ENCODE measurements at regions of chr5 and their contacts with region 1.

Region 1: GRCh38 chr5:116947691-116948528 is 373.3 kb upstream of the SEMA6A start:
- DNase-seq: peak; percentile 73
- H3K4me3 ChIP-seq: no peak overlapping the region
- H3K27ac ChIP-seq: no peak overlapping the region
- H3K4me1 ChIP-seq: no peaks in the 10 kb centered on the region
- CTCF ChIP-seq: peak; percentile 89

Region 2: GRCh38 chr5:116137544-116138378 is 810.1 kb before region 1 on chr5:
- CTCF ChIA-PET with region 1: no interaction called
- POLR2A ChIA-PET with region 1: no interaction called
- intact Hi-C with region 1: loop called (anchors 5 kb)
- DNase-seq: peak; percentile 61
- H3K4me3 ChIP-seq: no peak overlapping the region
- H3K27ac ChIP-seq: no peak overlapping the region
- H3K4me1 ChIP-seq: no peaks in the 10 kb centered on the region
- CTCF ChIP-seq: peak; percentile 93

Region 3: GRCh38 chr5:116557669-116558271 is 390.1 kb before region 1 on chr5:
- CTCF ChIA-PET with region 1: no interaction called
- POLR2A ChIA-PET with region 1: no interaction called
- intact Hi-C with region 1: loop called (anchors 5 kb)
- DNase-seq: peak; percentile 16
- H3K4me3 ChIP-seq: no peak overlapping the region
- H3K27ac ChIP-seq: no peak overlapping the region
- H3K4me1 ChIP-seq: no peaks in the 10 kb centered on the region
- CTCF ChIP-seq: peak; percentile 79

Region 4: DNA sequence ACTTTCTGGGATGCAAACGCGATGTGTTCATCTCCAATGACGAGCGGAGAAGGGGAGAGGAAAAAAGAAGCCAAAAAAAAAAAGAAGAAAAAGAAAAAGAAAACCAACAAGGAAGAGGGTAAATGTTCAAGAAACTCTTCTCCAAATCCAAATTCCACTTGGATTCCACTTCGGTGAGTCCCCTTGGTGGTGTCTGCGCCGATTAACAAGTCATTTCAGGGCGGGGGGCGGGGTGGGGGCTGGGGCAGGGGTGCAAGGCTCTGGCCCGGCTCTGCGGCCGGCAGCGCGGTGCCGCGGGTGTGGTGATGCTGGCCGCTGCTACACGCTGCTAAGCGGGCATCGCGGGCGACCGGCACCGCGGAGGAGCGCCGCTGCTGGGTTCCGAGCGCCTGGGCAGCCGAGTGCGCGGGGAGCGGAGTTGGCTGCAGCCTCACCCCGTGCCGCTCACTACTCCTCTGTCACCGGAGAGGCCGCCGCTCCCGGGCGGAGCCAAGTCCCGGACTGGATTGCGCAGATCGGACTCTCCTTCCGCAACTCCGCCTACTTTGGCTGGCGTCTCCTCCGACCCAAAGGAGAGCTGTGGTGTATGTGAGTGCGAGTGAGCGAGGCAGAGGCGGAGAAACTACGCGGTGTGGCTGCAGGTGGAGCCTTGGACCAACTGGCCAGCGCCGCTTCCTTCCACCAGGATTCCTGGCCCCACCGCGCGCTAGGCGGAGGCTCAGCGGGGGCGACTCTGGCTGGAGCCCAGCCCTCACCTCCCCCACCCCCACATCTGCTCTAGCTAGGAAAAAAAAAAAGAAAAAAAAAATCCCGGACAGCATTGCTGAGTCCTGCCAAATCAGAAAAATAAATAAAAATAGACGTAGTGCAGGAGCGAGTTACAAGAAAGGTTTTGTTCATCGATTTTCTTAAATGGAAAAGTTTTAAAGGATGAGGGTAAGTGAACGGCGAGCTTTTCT is 373.3 kb before region 1 on chr5 and contains the start of gene SEMA6A:
- CTCF ChIA-PET with region 1: no interaction called
- POLR2A ChIA-PET with region 1: interaction called, 3 read pairs
- intact Hi-C with region 1: loop called (anchors 5 kb)
- DNase-seq: no peak
- H3K4me3 ChIP-seq: no peak within 1 kb of the TSS
- H3K27ac ChIP-seq: no peak within 1 kb of the TSS
- H3K4me1 ChIP-seq: no peaks in the 10 kb centered on the region
- CTCF ChIP-seq: no peak
- total RNA-seq, gene SEMA6A: not detected in 2 replicates

Region 5: GRCh38 chr5:116652196-116652729 is 295.6 kb before region 1 on chr5:
- CTCF ChIA-PET with region 1: no interaction called
- POLR2A ChIA-PET with region 1: no interaction called
- intact Hi-C with region 1: loop called (anchors 10 kb)
- DNase-seq: no peak
- H3K4me3 ChIP-seq: no peak overlapping the region
- H3K27ac ChIP-seq: no peak overlapping the region
- H3K4me1 ChIP-seq: no peaks in the 10 kb centered on the region
- CTCF ChIP-seq: no peak

Region 6: DNA sequence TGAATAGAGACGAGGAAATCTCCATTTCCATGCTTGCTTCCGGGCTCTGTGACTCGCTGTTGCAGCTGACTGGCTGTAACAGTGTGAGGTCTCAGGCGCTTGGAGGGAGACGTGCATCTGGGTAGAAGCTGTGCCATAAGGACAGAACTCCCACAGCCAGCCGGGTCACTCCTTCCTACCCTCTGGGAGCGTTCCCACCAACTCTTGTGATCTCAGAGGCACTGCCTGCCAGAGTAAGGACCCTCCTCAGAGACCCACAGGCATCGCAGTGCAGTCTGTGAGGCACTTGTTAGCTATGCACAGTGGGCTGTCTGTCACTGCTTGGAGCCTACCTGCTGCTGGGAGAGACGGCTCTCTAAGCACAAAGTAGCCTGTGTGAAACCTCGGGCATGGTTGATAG is 169.9 kb before region 1 on chr5:
- CTCF ChIA-PET with region 1: no interaction called
- POLR2A ChIA-PET with region 1: no interaction called
- intact Hi-C with region 1: loop called (anchors 10 kb)
- DNase-seq: no peak
- H3K4me3 ChIP-seq: no peak overlapping the region
- H3K27ac ChIP-seq: no peak overlapping the region
- H3K4me1 ChIP-seq: no peaks in the 10 kb centered on the region
- CTCF ChIP-seq: no peak

Region 7: DNA sequence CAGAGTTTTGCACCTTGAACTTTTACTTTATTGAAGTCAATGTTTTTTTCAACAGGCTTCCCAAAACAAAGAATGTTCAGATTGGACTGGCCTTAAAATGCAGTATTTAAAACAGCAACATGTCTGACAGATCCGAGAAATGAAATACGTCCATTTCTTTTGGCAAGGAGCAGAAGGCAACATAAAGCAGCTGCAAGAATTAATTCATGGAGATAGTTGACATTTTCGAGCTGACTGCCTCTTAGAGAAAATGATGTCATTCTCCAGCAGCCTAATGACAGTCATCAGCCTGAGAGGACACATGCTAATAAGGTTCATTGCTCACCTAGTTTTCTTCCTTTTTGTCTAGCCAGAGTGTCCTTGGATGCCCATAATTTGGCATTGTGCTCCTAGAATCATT is 141.1 kb before region 1 on chr5:
- CTCF ChIA-PET with region 1: no interaction called
- POLR2A ChIA-PET with region 1: no interaction called
- intact Hi-C with region 1: loop called (anchors 10 kb)
- DNase-seq: no peak
- H3K4me3 ChIP-seq: no peak overlapping the region
- H3K27ac ChIP-seq: no peak overlapping the region
- H3K4me1 ChIP-seq: no peaks in the 10 kb centered on the region
- CTCF ChIP-seq: no peak

Measured in OCI-LY7 (cell line).